CD8-positive, alpha-beta T cell (primary cell): ENCODE measurements at regions of chr3 and their contacts with region 1.

Region 1: DNA sequence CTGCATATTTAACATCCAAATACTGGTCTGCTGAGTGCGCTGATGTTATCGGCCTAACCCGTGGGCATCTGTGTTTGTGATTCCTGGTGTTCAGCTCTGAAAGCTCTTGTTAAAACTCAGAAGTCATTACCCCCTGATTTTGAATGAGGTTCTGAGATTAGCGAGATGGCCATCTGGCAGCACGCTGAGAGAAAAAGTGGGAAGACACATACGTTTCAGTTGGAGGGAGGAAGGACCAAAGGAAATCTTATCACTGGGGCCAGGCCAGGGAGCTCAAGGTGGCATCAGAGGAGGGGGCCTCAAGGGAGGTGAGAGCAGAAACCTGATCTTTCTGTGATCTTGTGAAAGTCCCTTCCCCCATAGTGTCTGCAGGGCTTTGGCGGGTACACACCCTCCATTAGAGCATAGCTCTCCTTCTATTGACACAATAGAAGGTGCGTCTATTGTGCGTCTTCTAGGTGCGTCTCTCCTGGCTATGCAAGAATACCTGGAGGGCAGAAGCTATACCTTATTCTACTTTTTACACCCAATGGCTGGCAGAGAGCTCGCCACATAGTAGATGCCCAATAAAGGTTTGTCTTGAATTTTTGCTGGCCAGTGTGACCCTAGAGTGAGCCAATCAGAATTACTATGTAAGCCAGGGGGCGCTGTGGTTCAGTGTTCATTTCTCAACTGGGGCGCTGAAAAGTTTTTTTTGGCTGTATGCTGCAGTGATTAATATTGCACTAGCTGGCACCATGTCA is 182.4 kb downstream of the SHQ1 start:
- DNase-seq: peak; percentile 22 to 78 (median 55)
- ATAC-seq: peak; percentile 57
- H3K4me3 ChIP-seq: no peak overlapping the region
- H3K4me3 Mint-ChIP-seq: no peak overlapping the region
- H3K27ac ChIP-seq: no peak overlapping the region
- H3K27ac Mint-ChIP-seq: no peak overlapping the region
- H3K4me1 ChIP-seq: no peaks in the 10 kb centered on the region
- H3K4me1 Mint-ChIP-seq: no peaks in the 10 kb centered on the region
- H3K27me3 ChIP-seq: no peaks in the 10 kb centered on the region
- H3K27me3 Mint-ChIP-seq: no peaks in the 10 kb centered on the region
- CTCF ChIP-seq: peak; percentile 63

Region 2: DNA sequence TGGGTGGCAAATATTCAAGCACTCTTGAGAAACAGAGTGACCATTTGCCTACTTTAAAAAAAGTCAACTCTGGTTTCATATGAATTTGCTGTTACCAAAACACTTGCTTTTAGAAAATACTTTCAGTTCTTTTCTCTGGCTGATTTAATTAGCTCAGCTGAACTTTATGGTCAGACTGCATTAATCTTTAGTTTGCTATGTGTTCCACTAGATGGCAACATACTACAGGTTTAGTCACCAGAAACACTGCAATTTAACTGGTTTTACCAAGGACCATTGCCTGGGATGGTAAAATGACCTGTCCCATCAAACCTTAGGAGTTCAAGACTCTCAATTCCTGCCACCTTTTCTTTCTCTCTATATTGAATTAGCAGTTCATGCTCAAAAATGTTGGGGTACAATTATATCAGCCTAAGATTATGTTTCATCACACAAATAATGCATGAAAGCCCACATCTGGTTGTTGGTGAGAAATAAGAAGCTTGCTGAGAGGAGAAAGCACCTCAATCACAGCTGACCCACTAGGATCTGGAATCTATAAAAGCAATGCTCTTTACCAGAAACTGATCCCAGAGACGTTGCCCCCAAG is 954.9 kb before region 1 on chr3:
- CTCF ChIA-PET with region 1: interaction called, 3 read pairs
- POLR2A ChIA-PET with region 1: no interaction called
- intact Hi-C with region 1: loop called in 1 of 2 experiments (anchors 5 kb)
- DNase-seq: peak in 2 of 9 experiments; percentile 59 to 69
- ATAC-seq: peak; percentile 73
- H3K4me3 ChIP-seq: no peak overlapping the region
- H3K4me3 Mint-ChIP-seq: no peak overlapping the region
- H3K27ac ChIP-seq: no peak overlapping the region
- H3K27ac Mint-ChIP-seq: peak overlapping the region; percentile 7
- H3K4me1 ChIP-seq: peaks cover 23% of the 10 kb centered on the region
- H3K4me1 Mint-ChIP-seq: peaks cover 72% of the 10 kb centered on the region
- H3K27me3 ChIP-seq: no peaks in the 10 kb centered on the region
- H3K27me3 Mint-ChIP-seq: no peaks in the 10 kb centered on the region
- CTCF ChIP-seq: peak; percentile 87

Region 3: DNA sequence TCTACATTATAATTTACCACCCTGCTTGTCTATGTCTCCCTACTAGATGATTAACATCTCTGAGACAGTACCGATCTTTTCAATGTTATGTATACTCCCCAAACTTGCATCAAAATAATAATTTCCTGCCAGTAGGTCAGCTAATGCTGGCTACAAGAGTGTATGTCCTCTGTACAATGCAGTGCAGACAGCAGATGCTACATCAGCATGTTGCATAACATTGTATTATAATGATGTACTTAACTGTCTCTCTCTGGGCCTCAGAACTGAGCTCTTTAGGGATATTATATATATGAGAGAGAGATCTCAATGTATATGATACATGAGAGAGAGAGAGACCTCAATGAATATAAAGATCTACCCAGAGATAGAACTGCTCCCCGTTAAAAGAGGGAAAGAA is 274.2 kb before region 1 on chr3:
- CTCF ChIA-PET with region 1: no interaction called
- POLR2A ChIA-PET with region 1: no interaction called
- intact Hi-C with region 1: no loop called
- DNase-seq: no peak
- ATAC-seq: no peak
- H3K4me3 ChIP-seq: no peak overlapping the region
- H3K4me3 Mint-ChIP-seq: no peak overlapping the region
- H3K27ac ChIP-seq: no peak overlapping the region
- H3K27ac Mint-ChIP-seq: no peak overlapping the region
- H3K4me1 ChIP-seq: no peaks in the 10 kb centered on the region
- H3K4me1 Mint-ChIP-seq: peaks cover 56% of the 10 kb centered on the region
- H3K27me3 ChIP-seq: no peaks in the 10 kb centered on the region
- H3K27me3 Mint-ChIP-seq: no peaks in the 10 kb centered on the region
- CTCF ChIP-seq: no peak

Region 4: DNA sequence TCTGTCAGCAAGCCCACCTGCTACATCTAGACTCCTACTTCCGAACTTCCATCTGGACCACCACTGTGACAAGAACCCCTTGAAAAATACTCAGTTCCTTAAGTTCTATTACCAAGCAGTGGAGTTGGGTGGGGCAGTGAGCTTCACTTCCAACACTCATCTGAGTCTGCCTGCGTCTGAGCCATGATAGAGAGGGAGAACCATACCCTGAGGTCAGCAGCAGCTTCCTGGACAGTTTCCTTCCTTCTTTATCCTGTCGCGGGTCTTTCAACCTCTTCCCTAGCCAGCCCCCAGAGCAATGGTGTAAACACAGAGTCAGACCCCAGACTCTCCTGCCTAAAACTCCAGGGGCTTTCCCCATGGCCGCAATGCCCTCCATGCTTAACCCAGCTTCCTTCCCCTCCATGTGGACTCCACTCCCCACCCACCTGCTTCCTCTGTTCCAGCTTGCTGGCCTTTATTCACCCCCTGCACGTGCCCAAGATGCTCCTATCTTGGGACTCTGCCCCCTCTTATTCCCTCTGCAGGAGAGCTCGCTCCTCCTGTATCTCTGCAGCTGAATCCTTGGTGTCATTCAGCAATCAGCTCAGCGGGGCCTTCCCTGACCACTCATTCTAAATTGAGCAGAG is 28.8 kb before region 1 on chr3:
- CTCF ChIA-PET with region 1: interaction called, 11 read pairs
- POLR2A ChIA-PET with region 1: no interaction called
- intact Hi-C with region 1: no loop called
- DNase-seq: no peak
- ATAC-seq: no peak
- H3K4me3 ChIP-seq: no peak overlapping the region
- H3K4me3 Mint-ChIP-seq: no peak overlapping the region
- H3K27ac ChIP-seq: no peak overlapping the region
- H3K27ac Mint-ChIP-seq: no peak overlapping the region
- H3K4me1 ChIP-seq: no peaks in the 10 kb centered on the region
- H3K4me1 Mint-ChIP-seq: no peaks in the 10 kb centered on the region
- H3K27me3 ChIP-seq: no peaks in the 10 kb centered on the region
- H3K27me3 Mint-ChIP-seq: peaks cover 9% of the 10 kb centered on the region
- CTCF ChIP-seq: no peak

Region 5: GRCh38 chr3:72679540-72680198 is 13.8 kb after region 1 on chr3:
- CTCF ChIA-PET with region 1: interaction called, 24 read pairs
- POLR2A ChIA-PET with region 1: no interaction called
- intact Hi-C with region 1: no loop called
- DNase-seq: no peak
- ATAC-seq: no peak
- H3K4me3 ChIP-seq: no peak overlapping the region
- H3K4me3 Mint-ChIP-seq: no peak overlapping the region
- H3K27ac ChIP-seq: no peak overlapping the region
- H3K27ac Mint-ChIP-seq: no peak overlapping the region
- H3K4me1 ChIP-seq: no peaks in the 10 kb centered on the region
- H3K4me1 Mint-ChIP-seq: no peaks in the 10 kb centered on the region
- H3K27me3 ChIP-seq: no peaks in the 10 kb centered on the region
- H3K27me3 Mint-ChIP-seq: no peaks in the 10 kb centered on the region
- CTCF ChIP-seq: no peak

Region 6: GRCh38 chr3:72782521-72782920 is 116.6 kb after region 1 on chr3:
- CTCF ChIA-PET with region 1: interaction called, 11 read pairs
- POLR2A ChIA-PET with region 1: no interaction called
- intact Hi-C with region 1: no loop called
- DNase-seq: no peak
- ATAC-seq: no peak
- H3K4me3 ChIP-seq: no peak overlapping the region
- H3K4me3 Mint-ChIP-seq: no peak overlapping the region
- H3K27ac ChIP-seq: no peak overlapping the region
- H3K27ac Mint-ChIP-seq: peak overlapping the region; percentile 3
- H3K4me1 ChIP-seq: no peaks in the 10 kb centered on the region
- H3K4me1 Mint-ChIP-seq: peaks cover 12% of the 10 kb centered on the region
- H3K27me3 ChIP-seq: no peaks in the 10 kb centered on the region
- H3K27me3 Mint-ChIP-seq: no peaks in the 10 kb centered on the region
- CTCF ChIP-seq: no peak

Region 7: DNA sequence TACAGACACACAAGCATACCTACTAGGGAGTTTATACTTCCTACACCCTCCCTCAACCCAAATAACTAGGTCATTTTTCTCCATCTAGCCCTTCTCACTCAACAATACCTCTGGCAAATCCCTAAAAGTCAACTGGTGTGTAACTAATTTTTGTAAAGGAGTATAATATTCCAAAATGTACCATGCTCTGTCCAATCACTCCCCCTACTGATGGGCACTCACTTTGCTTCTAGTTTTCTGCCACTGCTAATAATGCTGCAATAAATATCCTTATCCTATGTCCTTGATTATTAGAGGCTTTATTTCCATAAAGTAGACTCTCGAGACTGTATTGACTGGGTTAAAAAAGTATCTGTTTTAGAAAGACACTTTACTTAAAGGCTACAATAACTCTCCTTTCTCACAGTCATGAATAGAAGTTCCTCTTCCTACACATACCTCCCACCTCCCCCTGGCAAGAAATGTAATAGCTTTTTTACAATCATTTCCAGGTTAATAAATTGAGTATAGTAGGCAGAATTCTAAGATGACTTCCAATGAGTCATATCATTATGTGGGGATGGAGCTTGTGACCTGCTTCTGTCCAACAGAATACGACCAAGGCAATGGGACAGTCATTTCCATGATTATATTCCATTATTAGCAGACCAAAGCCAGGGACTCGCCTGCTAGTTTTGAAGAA is 152.4 kb after region 1 on chr3:
- CTCF ChIA-PET with region 1: interaction called, 365 read pairs
- POLR2A ChIA-PET with region 1: interaction called, 26 read pairs
- intact Hi-C with region 1: loop called (anchors 1 kb)
- DNase-seq: peak in 2 of 9 experiments; percentile 6 to 22
- ATAC-seq: no peak
- H3K4me3 ChIP-seq: no peak overlapping the region
- H3K4me3 Mint-ChIP-seq: no peak overlapping the region
- H3K27ac ChIP-seq: no peak overlapping the region
- H3K27ac Mint-ChIP-seq: no peak overlapping the region
- H3K4me1 ChIP-seq: peaks cover 26% of the 10 kb centered on the region
- H3K4me1 Mint-ChIP-seq: peaks cover 8% of the 10 kb centered on the region
- H3K27me3 ChIP-seq: no peaks in the 10 kb centered on the region
- H3K27me3 Mint-ChIP-seq: no peaks in the 10 kb centered on the region
- CTCF ChIP-seq: no peak

Region 8: DNA sequence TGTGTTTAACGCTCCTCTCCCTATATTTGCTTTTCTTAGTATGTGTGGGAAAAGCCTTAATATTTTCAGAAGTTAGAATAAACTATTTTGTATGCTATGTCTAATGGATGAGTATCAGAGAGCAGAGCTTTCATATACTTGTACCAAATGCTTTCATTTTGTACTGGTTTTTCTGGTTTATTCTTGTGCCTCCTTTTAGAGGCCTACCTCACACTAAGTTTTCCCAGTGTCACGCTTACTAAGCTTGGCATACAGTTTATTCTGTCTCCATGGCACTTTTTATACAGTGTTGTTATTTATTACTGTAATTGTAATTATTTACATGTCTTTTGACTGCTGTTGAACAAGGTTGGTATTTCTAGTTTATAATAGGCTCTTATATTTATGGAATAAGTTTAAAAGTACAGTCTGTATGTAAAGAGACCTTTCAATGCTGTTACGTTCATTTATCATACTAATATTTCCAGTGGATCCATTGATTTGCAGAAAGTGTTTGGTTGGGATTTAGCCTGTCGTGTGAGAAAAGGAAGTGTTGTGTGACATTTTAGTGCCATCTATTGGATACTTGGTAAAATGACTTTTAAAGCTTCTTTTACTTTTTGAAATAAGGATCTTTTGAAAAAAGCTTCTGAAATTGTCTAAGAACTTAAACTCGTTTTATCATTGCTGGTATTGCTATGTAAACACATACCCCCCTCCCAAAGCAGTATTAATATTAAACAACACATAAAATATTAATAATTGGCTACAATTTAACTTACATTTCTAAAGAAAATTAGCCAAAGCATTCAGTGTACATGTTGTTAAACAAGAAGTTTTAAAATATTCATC is 390.4 kb after region 1 on chr3:
- CTCF ChIA-PET with region 1: interaction called, 6 read pairs
- POLR2A ChIA-PET with region 1: no interaction called
- intact Hi-C with region 1: loop called (anchors 2 to 5 kb)
- DNase-seq: peak in 2 of 9 experiments; percentile 49 to 57
- ATAC-seq: peak; percentile 29
- H3K4me3 ChIP-seq: no peak overlapping the region
- H3K4me3 Mint-ChIP-seq: no peak overlapping the region
- H3K27ac ChIP-seq: no peak overlapping the region
- H3K27ac Mint-ChIP-seq: peak overlapping the region; percentile 67
- H3K4me1 ChIP-seq: no peaks in the 10 kb centered on the region
- H3K4me1 Mint-ChIP-seq: peaks cover 28% of the 10 kb centered on the region
- H3K27me3 ChIP-seq: no peaks in the 10 kb centered on the region
- H3K27me3 Mint-ChIP-seq: no peaks in the 10 kb centered on the region
- CTCF ChIP-seq: peak; percentile 80